ENCODE measurements at regions of chr15 and their contacts with region 1.

Region 1: GRCh38 chr15:81863162-81863561 is 182.7 kb downstream of the MEX3B start:
- DNase-seq: no peak
- H3K4me3 ChIP-seq: no peak overlapping the region
- H3K27ac ChIP-seq: peak overlapping the region; percentile 30
- H3K4me1 ChIP-seq: peaks cover 92% of the 10 kb centered on the region
- CTCF ChIP-seq: no peak

Region 2: GRCh38 chr15:81825136-81825535 is 38.0 kb before region 1 on chr15:
- CTCF ChIA-PET with region 1: no interaction called
- POLR2A ChIA-PET with region 1: no interaction called
- intact Hi-C with region 1: loop called (anchors 2 kb)
- DNase-seq: peak; percentile 56
- H3K4me3 ChIP-seq: peak overlapping the region; percentile 17
- H3K27ac ChIP-seq: peak overlapping the region; percentile 64
- H3K4me1 ChIP-seq: peaks cover 35% of the 10 kb centered on the region
- CTCF ChIP-seq: no peak

Region 3: DNA sequence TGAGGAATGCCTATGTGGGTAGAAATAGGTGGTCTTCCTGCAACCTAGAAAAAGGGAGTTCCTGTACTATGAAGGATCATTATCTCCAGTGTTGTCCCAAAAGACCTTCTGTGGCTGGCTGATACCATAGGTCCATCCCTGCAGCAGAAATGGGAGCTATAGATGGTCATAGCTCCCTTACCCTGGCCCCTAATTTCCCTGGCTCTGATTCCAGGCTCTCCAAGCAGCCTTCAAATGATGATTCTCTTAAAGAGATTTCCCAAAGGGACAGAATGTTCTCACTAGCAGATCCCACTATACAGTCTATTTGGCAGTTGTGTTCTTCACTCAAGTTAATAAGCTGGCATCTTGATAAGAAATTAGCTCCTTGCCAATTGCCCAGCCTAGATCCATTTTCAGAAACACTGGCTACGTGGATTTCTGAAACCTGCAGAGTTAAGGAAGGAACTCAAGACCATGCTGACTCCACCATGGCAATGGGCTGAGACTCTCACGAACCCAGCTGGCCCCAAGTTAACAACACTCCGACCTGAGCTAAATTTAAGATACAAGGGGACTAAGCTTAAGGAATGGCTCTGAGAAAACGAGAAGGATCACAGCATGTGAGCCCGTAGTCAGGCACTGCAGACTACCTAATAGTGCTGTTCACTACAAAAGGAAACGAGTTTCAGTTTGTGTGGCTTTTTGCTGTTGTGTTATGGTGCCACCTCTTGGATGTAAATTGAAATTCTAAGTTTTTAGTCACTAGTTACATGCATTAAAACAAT is 1136.9 kb after region 1 on chr15:
- CTCF ChIA-PET with region 1: no interaction called
- POLR2A ChIA-PET with region 1: no interaction called
- intact Hi-C with region 1: loop called (anchors 10 kb)
- DNase-seq: peak; percentile 70
- H3K4me3 ChIP-seq: peak overlapping the region; percentile 29
- H3K27ac ChIP-seq: no peak overlapping the region
- H3K4me1 ChIP-seq: peaks cover 8% of the 10 kb centered on the region
- CTCF ChIP-seq: peak; percentile 83